ENCODE measurements at regions of chr9 and their contacts with region 1.

Region 1: DNA sequence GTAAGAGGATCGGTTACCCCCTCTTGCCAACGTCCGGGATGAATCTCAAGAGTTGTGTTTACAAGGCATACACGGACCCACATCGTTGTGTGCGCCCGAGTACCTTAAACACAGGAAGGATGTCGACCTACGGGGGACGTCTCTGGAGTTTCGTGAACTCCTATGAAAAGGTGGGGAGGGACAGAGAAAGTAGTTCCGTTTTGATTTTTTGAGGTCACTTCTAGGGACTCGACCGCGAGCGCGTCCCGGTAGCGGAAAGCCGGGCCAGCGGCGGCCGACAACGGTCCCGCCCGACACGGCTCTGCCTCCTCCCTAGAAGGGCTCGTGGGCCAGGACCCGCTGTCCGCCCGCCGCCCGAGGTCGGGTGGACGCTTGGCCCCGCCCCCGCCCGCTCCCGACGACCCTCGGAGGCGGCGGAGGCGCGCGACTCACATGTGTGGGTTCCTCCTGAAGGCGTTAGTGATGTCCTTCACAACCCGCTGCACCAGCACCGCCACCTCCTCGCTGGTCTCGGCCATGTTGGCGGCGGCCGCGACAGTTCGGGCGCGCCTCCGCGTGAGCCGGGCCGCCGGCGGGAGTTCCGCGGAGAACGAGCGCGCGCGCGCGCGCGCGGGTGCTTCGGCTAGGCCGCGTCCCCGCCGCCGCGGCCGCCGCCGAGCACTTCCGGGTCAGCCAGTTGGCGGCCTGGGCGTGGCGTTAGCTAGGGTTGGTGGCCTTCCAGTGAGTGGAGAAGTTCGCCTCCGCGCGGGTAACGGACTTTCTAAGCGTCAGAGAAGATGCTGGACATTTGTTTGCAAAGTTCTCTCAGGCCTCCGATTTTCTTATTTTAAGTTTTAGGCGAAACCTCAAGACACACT is at the start of gene PTAR1:
- DNase-seq: peak; percentile 94 to 95 (median 95)
- ATAC-seq: peak; percentile 95 to 97 (median 96)
- H3K4me3 ChIP-seq: peak within 1 kb of the TSS; percentile 77 to 80 (median 79)
- H3K27ac ChIP-seq: peak within 1 kb of the TSS; percentile 96 to 97 (median 96)
- H3K4me1 ChIP-seq: peaks cover 0 to 11% (median 5%) of the 10 kb centered on the region in 4 donors
- H3K27me3 ChIP-seq: no peaks in the 10 kb centered on the region
- CTCF ChIP-seq: no peak
- POLR2A ChIP-seq: peak; percentile 91
- total RNA-seq, gene PTAR1: 21.5 to 33.3 (median 27.0) TPM

Region 2: GRCh38 chr9:69223605-69224004 is 536.0 kb before region 1 on chr9:
- intact Hi-C with region 1: no loop called
- DNase-seq: no peak
- ATAC-seq: peak; percentile 59 to 83 (median 78)
- H3K4me3 ChIP-seq: no peak overlapping the region
- H3K27ac ChIP-seq: no peak overlapping the region
- H3K4me1 ChIP-seq: peaks cover 0 to 3% (median 0%) of the 10 kb centered on the region in 4 donors
- H3K27me3 ChIP-seq: no peaks in the 10 kb centered on the region
- CTCF ChIP-seq: peak; percentile 50 to 55 (median 52)
- POLR2A ChIP-seq: no peak

Region 3: GRCh38 chr9:69667306-69667705 is 92.3 kb before region 1 on chr9:
- intact Hi-C with region 1: loop called (anchors 5 to 10 kb)
- DNase-seq: no peak
- ATAC-seq: no peak
- H3K4me3 ChIP-seq: no peak overlapping the region
- H3K27ac ChIP-seq: no peak overlapping the region
- H3K4me1 ChIP-seq: no peaks in the 10 kb centered on the region
- H3K27me3 ChIP-seq: no peaks in the 10 kb centered on the region
- CTCF ChIP-seq: no peak
- POLR2A ChIP-seq: no peak

Region 4: GRCh38 chr9:69672596-69673310 is 86.9 kb before region 1 on chr9:
- intact Hi-C with region 1: loop called (anchors 5 to 10 kb)
- DNase-seq: peak; percentile 87 to 90 (median 90)
- ATAC-seq: peak; percentile 83 to 92 (median 86)
- H3K4me3 ChIP-seq: peak overlapping the region; percentile 61 to 76 (median 66)
- H3K27ac ChIP-seq: peak overlapping the region; percentile 72 to 98 (median 91)
- H3K4me1 ChIP-seq: peaks cover 0 to 5% (median 2%) of the 10 kb centered on the region in 4 donors
- H3K27me3 ChIP-seq: no peaks in the 10 kb centered on the region
- CTCF ChIP-seq: peak; percentile 84 to 91 (median 88)
- POLR2A ChIP-seq: no peak